Mammary epithelial cell (primary cell): ENCODE measurements at regions of chr2 and their contacts with region 1.

Region 1: GRCh38 chr2:192379736-192380135 is 185.0 kb upstream of the TMEFF2 start:
- DNase-seq: no peak
- H3K4me3 ChIP-seq: no peak overlapping the region
- H3K27ac ChIP-seq: no peak overlapping the region
- H3K4me1 ChIP-seq: no peaks in the 10 kb centered on the region
- H3K27me3 ChIP-seq: no peaks in the 10 kb centered on the region
- CTCF ChIP-seq: no peak

Region 2: DNA sequence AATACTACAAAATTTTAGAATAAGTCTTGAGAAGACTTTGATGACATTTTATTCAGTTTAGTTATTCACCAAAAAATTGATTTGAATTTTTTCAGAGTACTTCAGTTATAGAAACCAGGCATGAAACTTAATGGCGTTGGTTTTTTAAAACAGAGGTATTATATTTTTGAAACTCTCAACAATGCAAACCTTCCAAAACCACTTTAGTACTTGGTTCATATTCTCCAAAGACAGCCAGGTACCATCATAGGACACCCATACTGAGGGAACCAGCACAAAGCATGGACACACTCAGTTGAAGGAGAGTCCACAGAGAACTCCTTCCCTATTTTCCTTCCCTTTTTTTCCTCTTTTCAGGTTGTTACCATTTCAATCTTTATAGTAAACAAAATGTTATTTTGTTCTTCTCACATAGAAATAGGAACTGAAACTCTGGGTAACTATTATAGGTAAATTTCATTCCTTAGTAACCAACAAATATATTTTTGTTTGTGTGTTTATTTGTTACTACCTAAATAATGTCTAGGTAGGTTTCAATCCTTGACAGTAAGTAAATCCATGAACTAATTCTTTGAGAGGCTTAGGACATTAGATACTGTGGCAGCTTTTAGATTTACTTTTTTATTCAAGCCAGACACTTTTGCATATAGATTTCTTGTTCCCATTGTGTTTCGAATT is 280.8 kb before region 1 on chr2:
- CTCF ChIA-PET with region 1: no interaction called
- dilution Hi-C with region 1: no loop called
- in situ Hi-C with region 1: no loop called
- intact Hi-C with region 1: no loop called
- DNase-seq: no peak
- H3K4me3 ChIP-seq: no peak overlapping the region
- H3K27ac ChIP-seq: no peak overlapping the region
- H3K4me1 ChIP-seq: no peaks in the 10 kb centered on the region
- H3K27me3 ChIP-seq: peaks cover 1% of the 10 kb centered on the region
- CTCF ChIP-seq: no peak

Region 3: GRCh38 chr2:192448881-192449280 is 69.1 kb after region 1 on chr2:
- CTCF ChIA-PET with region 1: no interaction called
- dilution Hi-C with region 1: loop called (anchors 5 kb)
- in situ Hi-C with region 1: no loop called
- intact Hi-C with region 1: no loop called
- DNase-seq: no peak
- H3K4me3 ChIP-seq: no peak overlapping the region
- H3K27ac ChIP-seq: no peak overlapping the region
- H3K4me1 ChIP-seq: no peaks in the 10 kb centered on the region
- H3K27me3 ChIP-seq: peaks cover 1% of the 10 kb centered on the region
- CTCF ChIP-seq: no peak